Mucosa of descending colon (tissue), 3 donors: ENCODE measurements at regions of chr18 and their contacts with region 1.

Region 1: DNA sequence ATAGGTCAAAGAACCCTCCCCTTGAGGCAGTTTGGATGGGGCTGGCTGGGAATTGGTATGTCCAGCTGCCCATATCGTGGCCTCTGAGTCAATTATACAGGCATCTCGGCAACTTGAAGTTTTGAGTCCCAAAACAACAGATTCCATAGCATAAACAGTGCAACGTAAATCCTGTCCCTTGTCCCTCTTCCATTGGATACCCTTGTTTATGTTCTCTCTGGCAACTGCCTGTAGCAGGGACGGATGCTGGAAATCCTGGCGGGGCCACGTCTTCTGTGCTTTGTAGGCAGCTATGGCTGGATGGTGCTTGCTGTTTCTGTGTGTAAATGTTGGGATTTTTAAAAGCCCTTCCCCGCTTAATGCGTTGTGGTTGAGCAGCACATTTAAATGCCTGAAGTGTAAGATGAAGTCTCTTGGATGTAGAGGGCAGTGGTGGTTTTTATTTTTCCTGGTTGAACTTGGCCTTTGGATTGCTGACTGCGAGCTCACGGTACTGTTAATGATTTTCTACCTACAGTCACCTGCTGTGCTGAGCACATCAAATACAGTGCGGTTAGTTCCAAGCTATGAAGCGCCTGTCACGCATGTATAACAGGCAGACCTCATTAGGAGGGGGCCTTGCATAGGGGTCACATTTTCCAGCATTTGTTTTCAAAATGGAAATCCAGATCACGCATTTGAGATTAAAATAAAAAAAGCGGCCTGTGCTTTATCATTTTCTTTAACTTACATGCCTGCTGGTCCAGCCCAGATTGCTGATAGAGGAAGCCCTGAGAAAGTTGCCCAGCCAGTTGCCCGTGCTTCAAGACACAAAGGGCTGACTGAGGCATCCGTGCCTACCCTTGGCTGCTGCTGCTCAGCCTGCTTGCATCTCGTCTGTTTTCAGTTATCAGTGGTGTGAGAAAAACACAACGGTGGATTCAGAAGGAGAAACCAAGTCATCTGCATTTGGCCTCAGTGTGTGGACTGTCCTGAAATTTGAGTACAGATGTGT is 84.7 kb downstream of the NEDD4L start:
- DNase-seq: peak in 2 of 3 donors; percentile 59 to 62
- ATAC-seq: peak; percentile 97
- H3K4me3 ChIP-seq: no peak overlapping the region
- H3K4me1 ChIP-seq: peaks cover 13% of the 10 kb centered on the region
- CTCF ChIP-seq: no peak

Region 2: GRCh38 chr18:57881818-57882413 is 246.8 kb before region 1 on chr18:
- intact Hi-C with region 1: loop called in 1 of 2 experiments (anchors 10 kb)
- DNase-seq: peak in 2 of 3 donors; percentile 68 to 72
- ATAC-seq: peak; percentile 98
- H3K4me3 ChIP-seq: no peak overlapping the region
- H3K4me1 ChIP-seq: no peaks in the 10 kb centered on the region
- CTCF ChIP-seq: peak; percentile 83

Region 3: DNA sequence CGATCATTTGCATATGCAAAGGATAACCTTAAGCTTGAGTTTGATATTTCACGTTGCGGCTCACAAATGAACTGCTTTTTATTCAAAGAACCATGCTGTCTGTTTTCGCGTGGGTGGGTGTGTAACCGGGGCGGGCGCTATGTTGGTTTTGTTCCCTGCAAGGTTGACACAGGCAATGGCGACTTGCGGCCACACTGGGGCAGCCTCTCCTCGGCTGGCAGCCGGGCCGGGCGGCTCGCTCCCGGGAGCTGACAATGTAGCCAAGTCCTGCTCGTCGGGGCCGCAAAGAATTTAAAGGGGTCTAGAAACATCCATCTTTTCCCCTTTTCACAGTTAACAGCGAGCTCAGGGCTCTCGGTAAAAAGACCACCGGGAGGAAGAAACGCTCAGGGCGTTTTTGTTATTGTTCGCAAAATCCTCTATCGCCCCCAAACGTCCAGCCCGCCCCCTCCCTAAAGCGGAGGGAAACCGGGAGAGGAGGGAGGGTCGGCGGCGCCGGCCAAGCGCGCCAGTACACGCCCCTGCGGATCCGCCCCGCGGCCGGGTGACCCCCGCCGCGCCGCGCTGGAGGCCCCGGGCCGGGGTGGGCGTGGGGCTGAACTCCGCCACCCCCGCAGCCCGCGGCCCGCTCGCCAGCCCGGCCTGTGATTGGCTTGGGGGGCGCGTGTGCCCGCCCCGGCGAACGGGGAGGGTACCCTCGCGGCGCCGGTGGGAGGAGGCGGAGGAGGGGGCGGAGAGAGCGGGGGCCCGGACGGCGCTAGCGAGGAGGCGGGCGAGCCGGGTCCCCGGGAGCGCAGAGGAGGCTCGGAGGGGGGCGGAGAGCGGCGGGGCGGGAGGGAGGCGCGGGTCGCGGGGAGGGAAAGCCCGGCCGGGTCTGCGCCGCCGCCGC is 84.9 kb before region 1 on chr18 and contains the start of gene NEDD4L:
- intact Hi-C with region 1: loop called (anchors 5 kb)
- DNase-seq: peak; percentile 89 to 91 (median 91)
- ATAC-seq: peak; percentile 81
- H3K4me3 ChIP-seq: peak within 1 kb of the TSS; percentile 77
- H3K4me1 ChIP-seq: peaks cover 7% of the 10 kb centered on the region
- CTCF ChIP-seq: peak; percentile 66
- total RNA-seq, gene NEDD4L: 161 to 309 (median 256) TPM